Activated CD4-positive, alpha-beta memory T cell treated with anti-CD3 and anti-CD28 coated beads for 36 hours (primary cell): ENCODE measurements at regions of chr5 and their contacts with region 1.

Region 1: DNA sequence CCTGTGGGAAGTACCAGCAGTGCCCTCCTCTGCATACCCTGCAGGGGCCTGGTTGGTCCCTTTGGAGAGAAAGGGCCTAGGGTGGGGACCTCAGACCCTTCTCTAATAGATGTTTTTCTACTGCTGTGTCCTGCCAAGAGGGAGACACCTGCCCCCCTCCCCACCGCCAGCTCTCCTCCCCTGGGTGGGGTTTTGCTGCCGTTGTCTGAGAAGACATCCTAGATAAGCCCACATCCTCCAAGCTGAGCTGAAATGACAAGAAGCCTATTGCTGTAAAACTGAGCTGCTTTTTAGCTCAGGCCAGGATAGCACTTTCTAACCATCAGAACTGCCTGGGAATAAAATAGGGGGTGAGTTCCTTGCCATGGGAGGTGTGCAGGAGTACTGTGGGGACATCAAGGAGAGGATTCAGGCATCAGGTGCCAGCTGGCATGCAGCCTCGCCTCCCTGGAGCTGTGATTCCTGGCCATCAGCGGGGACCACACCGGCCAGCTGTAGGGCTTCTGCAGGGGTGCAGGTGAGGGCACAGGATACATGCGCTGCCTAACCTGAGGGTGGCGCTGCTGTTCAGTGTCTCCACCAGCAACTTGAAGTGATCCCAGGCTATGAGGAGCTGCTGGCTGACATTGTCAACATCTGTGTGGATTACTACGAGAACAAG is 37.9 kb downstream of the CYFIP2 start:
- DNase-seq: peak; percentile 74
- H3K4me3 Mint-ChIP-seq: no peak overlapping the region
- H3K27ac Mint-ChIP-seq: peak overlapping the region; percentile 73
- H3K4me1 Mint-ChIP-seq: peaks cover 71% of the 10 kb centered on the region
- H3K27me3 Mint-ChIP-seq: no peaks in the 10 kb centered on the region

Region 2: DNA sequence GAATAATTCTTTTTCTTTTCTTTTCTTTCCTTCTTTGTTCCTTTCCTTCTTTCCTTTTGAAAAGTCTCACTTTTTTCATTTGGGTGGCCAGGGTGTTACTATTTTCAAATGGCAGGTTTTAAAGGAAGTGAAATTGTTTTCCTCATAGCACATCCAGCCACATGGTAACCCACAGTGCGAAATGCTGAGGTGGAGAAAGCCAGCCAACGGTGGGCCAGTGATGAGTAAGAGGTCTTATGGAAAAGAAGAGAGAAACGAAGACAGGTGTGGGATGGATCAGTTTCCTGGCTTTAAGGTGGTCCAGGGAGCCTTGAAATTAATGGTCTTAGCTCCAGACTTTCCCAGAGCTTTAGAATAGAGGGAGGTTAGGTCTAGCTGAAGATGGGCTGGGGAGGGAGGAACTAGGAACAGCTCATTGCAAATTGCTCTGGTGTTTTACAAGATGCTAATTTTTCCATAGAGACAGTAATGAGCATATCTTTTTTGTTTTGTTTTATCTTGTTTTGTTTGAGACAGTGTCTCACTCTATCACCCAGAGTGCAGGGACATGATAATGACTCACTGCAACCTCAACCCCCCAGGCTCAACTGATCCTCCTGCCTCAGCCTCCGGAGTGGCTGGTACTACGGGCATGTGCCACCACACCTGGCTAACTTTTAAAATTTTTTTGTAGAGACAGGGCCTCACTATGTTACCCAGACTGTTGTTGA is 105.4 kb before region 1 on chr5:
- CTCF ChIA-PET with region 1: no interaction called
- POLR2A ChIA-PET with region 1: no interaction called
- intact Hi-C with region 1: no loop called
- DNase-seq: peak; percentile 77
- H3K4me3 Mint-ChIP-seq: peak overlapping the region; percentile 53
- H3K27ac Mint-ChIP-seq: peak overlapping the region; percentile 95
- H3K4me1 Mint-ChIP-seq: peaks cover 94% of the 10 kb centered on the region
- H3K27me3 Mint-ChIP-seq: no peaks in the 10 kb centered on the region

Region 3: DNA sequence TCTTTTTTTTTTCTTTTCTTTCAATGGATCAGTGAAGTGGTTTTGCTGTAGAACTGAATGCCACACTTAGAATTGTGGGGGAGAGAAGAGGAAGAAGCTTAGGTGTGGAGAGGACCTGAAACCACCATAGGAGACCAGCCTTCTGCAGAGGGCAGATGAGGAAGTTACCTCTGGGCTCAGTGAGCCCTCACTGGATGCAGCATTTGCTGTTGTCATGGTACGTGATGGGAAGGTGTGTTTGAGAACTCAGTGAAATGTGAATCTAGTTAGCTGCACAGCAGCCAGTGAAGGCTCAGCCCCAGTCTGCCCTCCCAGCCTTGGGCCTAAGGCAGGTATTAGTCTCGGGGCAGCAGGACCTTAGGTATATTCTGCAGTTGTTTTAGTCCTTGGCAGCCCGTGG is 20.4 kb before region 1 on chr5:
- CTCF ChIA-PET with region 1: interaction called, 10 read pairs
- POLR2A ChIA-PET with region 1: no interaction called
- intact Hi-C with region 1: no loop called
- DNase-seq: peak; percentile 25
- H3K4me3 Mint-ChIP-seq: no peak overlapping the region
- H3K27ac Mint-ChIP-seq: peak overlapping the region; percentile 77
- H3K4me1 Mint-ChIP-seq: peaks cover 83% of the 10 kb centered on the region
- H3K27me3 Mint-ChIP-seq: no peaks in the 10 kb centered on the region